ENCODE measurements at regions of chr14 and their contacts with region 1.

Region 1: DNA sequence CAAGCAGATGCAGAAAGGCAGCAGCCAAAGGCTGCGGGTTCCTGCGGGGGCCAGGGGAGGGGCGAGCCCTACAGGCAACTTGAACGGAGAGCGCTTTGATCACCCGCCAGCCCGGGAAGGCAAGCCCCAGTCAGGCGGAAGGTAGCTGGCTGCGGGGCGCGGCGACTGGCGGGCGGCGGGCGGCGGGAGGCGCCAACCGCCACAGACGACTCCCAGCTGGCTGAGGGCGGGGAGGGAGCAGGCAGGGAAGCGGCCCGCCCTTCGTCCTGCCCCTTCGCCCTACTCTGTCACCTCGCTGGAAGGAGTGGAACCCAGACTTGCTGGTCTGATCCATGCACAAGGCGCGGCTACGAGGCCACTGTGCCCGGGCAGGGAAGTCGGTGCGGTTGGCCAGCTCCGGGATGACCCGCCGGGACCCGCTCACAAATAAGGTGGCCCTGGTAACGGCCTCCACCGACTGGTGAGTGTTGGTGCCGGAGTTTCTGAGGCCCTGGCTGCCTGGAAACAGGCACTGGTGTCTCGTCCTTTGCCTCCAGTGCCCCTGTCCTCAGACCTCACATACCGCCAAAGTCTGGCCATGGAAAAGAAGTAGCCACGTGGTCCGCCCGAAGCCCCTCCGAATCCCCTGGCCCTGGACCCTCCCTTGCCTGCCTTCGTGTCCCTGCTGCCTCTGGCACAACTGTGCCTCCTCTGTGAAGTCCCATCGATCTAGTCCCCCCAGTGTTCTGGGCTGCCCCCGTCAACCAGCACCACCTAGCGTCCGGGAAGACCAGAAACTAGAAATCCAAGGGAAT is 15.4 kb upstream of the CARMIL3 start:
- DNase-seq: peak; percentile 54 to 86
- H3K4me3 ChIP-seq: peak overlapping the region; percentile 58 to 69
- H3K27ac ChIP-seq: peak overlapping the region; percentile 89 to 90
- H3K4me1 ChIP-seq: peaks cover 0 to 2% of the 10 kb centered on the region in 2 donors
- H3K27me3 ChIP-seq: no peaks in the 10 kb centered on the region
- CTCF ChIP-seq: peak; percentile 75 to 83 (median 75)

Region 2: GRCh38 chr14:23829736-23830502 is 206.4 kb before region 1 on chr14:
- intact Hi-C with region 1: no loop called
- DNase-seq: no peak
- H3K4me3 ChIP-seq: no peak overlapping the region
- H3K27ac ChIP-seq: peak overlapping the region in 1 of 2 donors; percentile 38
- H3K4me1 ChIP-seq: peaks cover 0 to 3% of the 10 kb centered on the region in 2 donors
- H3K27me3 ChIP-seq: no peaks in the 10 kb centered on the region
- CTCF ChIP-seq: no peak

Region 3: DNA sequence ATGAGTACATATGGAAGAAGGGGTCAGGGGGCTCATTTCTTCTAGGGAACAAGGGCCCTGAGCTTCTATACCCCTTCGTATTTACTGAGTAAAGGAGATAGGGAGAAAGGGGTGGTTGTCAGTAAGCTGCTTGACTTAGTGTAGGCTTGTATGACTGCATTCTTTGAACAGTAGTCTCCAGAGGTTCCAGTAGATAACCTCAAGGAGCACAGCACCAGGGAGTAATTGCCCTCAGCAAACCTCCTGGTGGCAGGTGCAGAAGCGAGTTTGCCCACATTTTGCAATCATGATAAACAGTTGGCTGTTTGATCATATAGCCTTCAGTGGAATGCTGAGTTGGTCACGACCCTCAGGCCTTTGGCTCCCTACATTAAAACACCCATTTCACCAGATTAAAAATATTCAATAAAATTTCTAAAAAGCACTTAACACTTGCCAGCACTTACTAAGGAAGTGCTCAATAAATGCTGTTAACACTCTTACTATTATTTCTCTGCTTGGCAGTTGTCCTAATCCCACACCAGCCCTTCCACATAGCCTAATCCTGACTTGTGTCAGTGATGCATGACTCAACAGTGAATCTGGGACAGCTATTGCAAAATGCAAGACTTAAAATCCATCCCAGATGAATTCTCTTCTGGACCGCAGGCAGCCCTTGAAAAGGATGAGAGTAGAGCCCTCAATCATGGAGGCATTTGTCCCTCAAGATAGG is 51.3 kb before region 1 on chr14:
- intact Hi-C with region 1: loop called (anchors 2 kb)
- DNase-seq: no peak
- H3K4me3 ChIP-seq: no peak overlapping the region
- H3K27ac ChIP-seq: no peak overlapping the region
- H3K4me1 ChIP-seq: peaks cover 0 to 12% of the 10 kb centered on the region in 2 donors
- H3K27me3 ChIP-seq: no peaks in the 10 kb centered on the region
- CTCF ChIP-seq: no peak

Region 4: DNA sequence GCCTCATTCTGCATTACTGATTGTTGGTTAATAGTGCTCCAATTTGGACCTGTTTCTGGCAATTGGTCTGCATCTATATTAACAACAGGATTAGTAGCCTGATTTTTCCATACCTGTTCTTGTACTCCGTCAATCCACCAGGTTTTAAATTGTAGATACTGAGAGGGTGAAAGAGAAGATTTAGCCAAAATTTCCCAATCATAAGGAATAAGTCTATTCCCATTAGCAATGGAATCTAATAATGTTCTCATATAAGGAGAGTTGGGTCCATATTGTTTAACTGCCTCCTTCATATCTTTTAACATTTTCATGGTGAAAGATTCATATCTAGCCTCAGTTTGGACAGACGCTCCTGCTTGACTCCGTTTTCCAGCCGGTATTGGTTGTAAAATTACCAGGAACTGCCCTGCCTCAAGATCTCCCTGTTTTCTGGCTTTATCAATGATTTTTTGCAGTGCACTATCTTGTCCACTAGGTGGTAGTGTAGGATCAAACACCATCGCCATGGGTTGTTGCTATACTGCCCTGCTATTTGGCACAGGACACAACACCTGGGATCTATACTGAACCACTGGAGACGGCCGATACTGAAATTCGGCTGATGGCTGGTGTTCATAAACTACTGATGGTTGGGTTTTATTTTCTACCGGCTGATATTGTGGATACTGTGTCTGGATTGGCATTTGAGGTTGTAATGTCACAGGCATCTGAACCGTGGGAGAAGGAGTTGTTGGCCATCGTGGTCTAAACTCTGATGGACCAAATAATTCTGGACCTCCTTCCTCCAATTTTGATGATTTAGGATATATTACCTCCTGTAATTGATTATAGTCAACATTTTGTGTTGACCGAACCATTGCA is 22.5 kb before region 1 on chr14:
- intact Hi-C with region 1: loop called (anchors 1 kb)
- DNase-seq: no peak
- H3K4me3 ChIP-seq: no peak overlapping the region
- H3K27ac ChIP-seq: no peak overlapping the region
- H3K4me1 ChIP-seq: peaks cover 0 to 4% of the 10 kb centered on the region in 2 donors
- H3K27me3 ChIP-seq: no peaks in the 10 kb centered on the region
- CTCF ChIP-seq: peak; percentile 74 to 93 (median 82)

Measured in ascending aorta (tissue), 2 donors.